Motor neuron (in vitro differentiated cells): ENCODE measurements at regions of chr13 and their contacts with region 1.

Region 1: GRCh38 chr13:51452361-51453206 is at the start of gene INTS6:
- ATAC-seq: peak; percentile 75 to 84 (median 80)
- H3K4me3 ChIP-seq: peak within 1 kb of the TSS; percentile 64 to 88 (median 68)
- H3K27ac ChIP-seq: peak within 1 kb of the TSS; percentile 94
- H3K4me1 ChIP-seq: peaks cover 0 to 11% of the 10 kb centered on the region in 2 donors
- total RNA-seq, gene INTS6: 25.1 to 76.7 (median 34.2) TPM

Region 2: GRCh38 chr13:51192348-51192747 is 260.2 kb before region 1 on chr13:
- in situ Hi-C with region 1: no loop called
- ATAC-seq: peak in 1 of 8 experiments; percentile 59
- H3K4me3 ChIP-seq: no peak overlapping the region
- H3K27ac ChIP-seq: no peak overlapping the region
- H3K4me1 ChIP-seq: no peaks in the 10 kb centered on the region

Region 3: GRCh38 chr13:51583875-51584730 is 131.5 kb after region 1 on chr13 and contains the start of gene WDFY2:
- in situ Hi-C with region 1: loop called in 1 of 9 experiments (anchors 25 kb)
- ATAC-seq: peak; percentile 78 to 87 (median 84)
- H3K4me3 ChIP-seq: peak within 1 kb of the TSS; percentile 70 to 87 (median 86)
- H3K27ac ChIP-seq: peak within 1 kb of the TSS; percentile 80
- H3K4me1 ChIP-seq: peaks cover 6 to 23% of the 10 kb centered on the region in 2 donors
- total RNA-seq, gene WDFY2: 7.0 to 20.5 (median 11.7) TPM